ENCODE measurements at regions of chr11 and their contacts with region 1.

Region 1: GRCh38 chr11:75721855-75722668 is 4.4 kb downstream of the MOGAT2 start:
- DNase-seq: no peak

Region 2: DNA sequence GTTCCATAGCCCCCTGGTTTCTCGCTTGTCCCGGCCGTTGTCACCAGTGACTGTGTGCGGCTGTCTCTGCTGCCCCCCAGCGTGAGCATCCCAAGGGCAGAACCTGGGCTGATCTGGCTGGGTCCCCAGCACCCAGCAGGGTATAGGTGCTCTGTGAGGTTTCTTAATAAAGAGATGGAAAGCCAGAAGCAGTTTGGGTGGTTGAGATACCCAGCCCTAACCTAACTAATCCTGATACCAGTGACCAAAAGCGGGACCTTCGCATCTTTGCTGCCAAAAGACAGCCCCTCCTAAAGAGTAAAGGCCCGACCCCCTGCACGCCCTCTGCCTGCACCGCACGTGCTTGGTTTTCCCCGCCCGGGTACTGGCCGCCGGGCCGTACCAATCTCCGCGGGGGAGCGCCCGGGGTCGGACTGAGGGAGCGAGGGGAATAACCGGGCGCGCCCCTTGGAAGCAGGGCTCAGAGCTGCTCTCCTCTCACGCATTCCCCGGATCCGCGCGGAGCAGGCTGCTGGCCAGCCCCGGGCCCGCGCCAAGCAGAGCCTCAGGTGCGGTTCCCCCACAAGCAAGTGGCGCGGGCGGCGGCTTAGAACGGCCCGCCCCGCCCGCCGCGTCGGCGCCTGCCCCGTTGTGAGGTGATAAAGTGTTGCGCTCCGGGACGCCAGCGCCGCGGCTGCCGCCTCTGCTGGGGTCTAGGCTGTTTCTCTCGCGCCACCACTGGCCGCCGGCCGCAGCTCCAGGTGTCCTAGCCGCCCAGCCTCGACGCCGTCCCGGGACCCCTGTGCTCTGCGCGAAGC is 46.2 kb after region 1 on chr11 and contains the start of gene DGAT2:
- intact Hi-C with region 1: loop called (anchors 1 kb)
- DNase-seq: peak; percentile 92
- total RNA-seq, gene DGAT2: 10.3 TPM